ENCODE measurements at regions of chr4 and their contacts with region 1.

Region 1: DNA sequence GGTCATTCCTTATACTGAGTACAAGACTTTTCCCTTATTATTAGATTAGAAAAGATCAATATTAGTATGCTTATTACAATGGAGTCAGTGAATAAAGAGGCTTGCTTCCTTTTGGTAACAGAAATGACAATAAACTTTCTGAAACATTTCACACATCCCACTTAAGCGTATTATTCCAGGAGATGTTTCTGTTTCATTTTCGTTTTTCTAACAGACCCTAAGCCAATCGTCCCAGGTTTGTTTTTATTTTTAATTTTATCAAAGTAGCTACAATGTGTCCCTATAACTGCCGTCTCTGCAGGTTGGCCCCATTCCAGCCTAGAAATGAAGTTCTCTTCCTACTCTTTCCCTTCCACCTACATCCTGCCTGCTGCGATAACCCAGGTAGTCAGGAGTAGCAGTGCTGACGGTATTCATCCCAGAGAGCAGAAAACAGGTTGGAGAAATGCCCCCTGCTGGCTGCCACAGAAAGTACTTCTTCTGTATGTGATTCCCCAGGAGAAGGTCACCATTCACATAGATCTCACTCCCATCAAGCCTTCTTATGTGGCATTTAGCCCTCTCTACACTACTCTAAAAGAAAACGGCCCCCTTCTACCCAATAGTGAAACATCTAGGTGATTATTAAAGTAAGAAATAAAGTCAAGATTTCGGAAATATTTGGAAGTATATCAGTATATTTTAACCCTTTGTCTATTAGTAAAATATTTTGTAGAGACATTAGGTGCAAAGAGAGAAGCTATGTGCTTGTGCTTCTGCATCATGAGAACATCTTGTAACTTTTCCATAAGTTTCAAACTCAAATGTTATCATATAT is 40.4 kb downstream of the ENPEP start:
- DNase-seq: peak; percentile 90
- H3K4me3 Mint-ChIP-seq: peak overlapping the region; percentile 94
- H3K27ac Mint-ChIP-seq: peak overlapping the region; percentile 64
- H3K4me1 Mint-ChIP-seq: peaks cover 13% of the 10 kb centered on the region
- H3K27me3 Mint-ChIP-seq: peaks cover 13% of the 10 kb centered on the region

Region 2: GRCh38 chr4:109998867-109999584 is 517.3 kb before region 1 on chr4:
- intact Hi-C with region 1: loop called (anchors 1 kb)
- DNase-seq: peak; percentile 86
- H3K4me3 Mint-ChIP-seq: no peak overlapping the region
- H3K27ac Mint-ChIP-seq: no peak overlapping the region
- H3K4me1 Mint-ChIP-seq: peaks cover 22% of the 10 kb centered on the region
- H3K27me3 Mint-ChIP-seq: peaks cover 5% of the 10 kb centered on the region

Region 3: GRCh38 chr4:110005461-110006056 is 510.8 kb before region 1 on chr4:
- intact Hi-C with region 1: loop called (anchors 1 kb)
- DNase-seq: peak; percentile 80
- H3K4me3 Mint-ChIP-seq: no peak overlapping the region
- H3K27ac Mint-ChIP-seq: no peak overlapping the region
- H3K4me1 Mint-ChIP-seq: peaks cover 19% of the 10 kb centered on the region
- H3K27me3 Mint-ChIP-seq: peaks cover 7% of the 10 kb centered on the region

Region 4: DNA sequence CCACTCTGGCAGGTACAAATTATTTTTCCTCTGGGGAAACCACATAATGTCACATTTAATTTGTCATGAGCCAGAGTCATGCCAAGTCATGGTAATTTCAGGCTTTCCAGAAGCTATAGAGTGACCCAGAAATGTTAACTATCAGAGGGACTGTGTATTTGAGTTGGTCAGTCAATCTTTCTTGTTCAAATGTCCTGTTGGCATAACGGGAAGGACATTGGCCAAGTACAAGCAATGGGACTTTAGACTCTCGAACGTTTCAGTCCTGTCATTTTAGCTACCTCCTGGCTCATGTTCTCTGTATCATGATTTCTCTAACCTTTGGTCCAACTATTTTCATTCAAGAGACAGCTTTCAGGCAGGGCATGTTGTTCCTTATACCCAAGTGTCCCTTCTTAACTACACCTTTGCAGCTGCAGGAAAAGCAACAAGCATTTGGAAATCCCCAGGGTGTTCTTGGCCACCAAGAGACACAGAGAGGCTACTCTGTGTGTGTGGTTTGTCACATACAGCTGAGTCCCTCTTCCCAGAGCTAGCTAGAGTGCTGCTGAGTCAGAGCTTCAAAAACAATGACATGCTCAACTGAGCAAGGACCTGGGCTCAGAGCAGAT is 461.1 kb before region 1 on chr4:
- intact Hi-C with region 1: loop called (anchors 5 kb)
- DNase-seq: peak; percentile 82
- H3K4me3 Mint-ChIP-seq: peak overlapping the region; percentile 67
- H3K27ac Mint-ChIP-seq: peak overlapping the region; percentile 74
- H3K4me1 Mint-ChIP-seq: peaks cover 62% of the 10 kb centered on the region
- H3K27me3 Mint-ChIP-seq: no peaks in the 10 kb centered on the region

Region 5: DNA sequence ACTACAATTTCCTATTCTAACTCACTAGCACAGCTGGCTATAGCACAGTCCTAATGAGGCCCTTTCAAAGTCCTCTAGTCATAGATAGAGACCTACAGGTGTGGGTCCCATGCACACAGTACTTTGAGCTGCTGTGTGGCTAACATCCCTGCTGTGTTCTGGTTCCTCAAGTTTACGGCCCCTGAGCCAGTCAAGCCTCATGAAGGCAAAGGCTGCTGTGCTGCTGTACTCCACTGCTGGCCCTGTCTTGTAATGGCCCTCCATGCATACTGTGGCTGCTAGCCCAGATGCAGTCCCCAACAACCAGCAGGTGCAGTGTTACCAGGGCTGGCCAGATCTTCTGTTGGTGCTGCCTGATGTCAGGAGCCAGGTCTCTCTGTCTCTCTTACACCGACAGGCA is 63.8 kb before region 1 on chr4:
- intact Hi-C with region 1: no loop called
- DNase-seq: no peak
- H3K4me3 Mint-ChIP-seq: no peak overlapping the region
- H3K27ac Mint-ChIP-seq: no peak overlapping the region
- H3K4me1 Mint-ChIP-seq: no peaks in the 10 kb centered on the region
- H3K27me3 Mint-ChIP-seq: peaks cover 16% of the 10 kb centered on the region

Measured in activated CD4-positive, alpha-beta T cell treated with anti-CD3 and anti-CD28 coated beads, Interleukin-2, amount 10 ng/mL, durations not matched to agents 24 days and 14 days (primary cell).